ENCODE measurements at regions of chr20 and their contacts with region 1.

Region 1: GRCh38 chr20:58890518-58891085 is 38.1 kb downstream of the GNAS start:
- DNase-seq: peak; percentile 86
- ATAC-seq: peak; percentile 81

Region 2: DNA sequence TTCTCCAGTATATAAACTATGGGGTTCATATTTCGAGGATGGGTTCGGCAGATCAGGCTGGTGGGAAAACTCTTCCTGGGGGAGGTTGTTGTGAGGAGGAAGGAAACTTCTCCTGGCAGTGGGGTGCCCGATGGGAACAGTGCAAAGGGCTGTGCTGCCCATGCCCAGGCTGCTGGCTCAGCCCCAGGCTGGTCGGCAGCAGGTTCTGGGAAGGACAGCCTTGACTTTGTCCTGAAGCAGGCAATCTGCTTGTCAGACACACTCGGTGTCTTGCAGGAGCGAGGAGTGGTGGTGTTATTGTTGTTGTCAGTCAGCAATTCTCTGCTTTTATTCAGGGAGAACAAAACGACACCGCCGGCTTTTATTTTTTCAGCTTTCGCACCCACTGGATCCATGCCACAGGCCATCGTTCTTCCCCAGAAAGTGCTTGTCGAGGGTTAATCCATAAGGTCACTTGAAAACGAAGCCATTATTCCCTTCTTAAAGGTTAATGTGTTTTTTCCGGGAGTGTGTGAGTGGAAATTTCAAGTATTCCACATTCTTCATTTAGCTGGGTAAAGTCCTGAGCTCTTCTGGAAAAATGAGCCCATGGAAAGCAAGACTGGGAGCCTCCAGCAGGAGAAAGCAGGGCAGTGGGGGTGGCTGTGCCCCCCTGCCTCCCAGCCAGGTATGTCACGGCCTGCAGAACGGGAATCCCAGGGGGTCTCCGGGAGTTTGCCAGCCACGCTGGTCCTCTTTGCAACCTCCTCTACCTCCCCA is 296.5 kb before region 1 on chr20:
- intact Hi-C with region 1: no loop called
- DNase-seq: peak; percentile 14
- ATAC-seq: no peak

Region 3: DNA sequence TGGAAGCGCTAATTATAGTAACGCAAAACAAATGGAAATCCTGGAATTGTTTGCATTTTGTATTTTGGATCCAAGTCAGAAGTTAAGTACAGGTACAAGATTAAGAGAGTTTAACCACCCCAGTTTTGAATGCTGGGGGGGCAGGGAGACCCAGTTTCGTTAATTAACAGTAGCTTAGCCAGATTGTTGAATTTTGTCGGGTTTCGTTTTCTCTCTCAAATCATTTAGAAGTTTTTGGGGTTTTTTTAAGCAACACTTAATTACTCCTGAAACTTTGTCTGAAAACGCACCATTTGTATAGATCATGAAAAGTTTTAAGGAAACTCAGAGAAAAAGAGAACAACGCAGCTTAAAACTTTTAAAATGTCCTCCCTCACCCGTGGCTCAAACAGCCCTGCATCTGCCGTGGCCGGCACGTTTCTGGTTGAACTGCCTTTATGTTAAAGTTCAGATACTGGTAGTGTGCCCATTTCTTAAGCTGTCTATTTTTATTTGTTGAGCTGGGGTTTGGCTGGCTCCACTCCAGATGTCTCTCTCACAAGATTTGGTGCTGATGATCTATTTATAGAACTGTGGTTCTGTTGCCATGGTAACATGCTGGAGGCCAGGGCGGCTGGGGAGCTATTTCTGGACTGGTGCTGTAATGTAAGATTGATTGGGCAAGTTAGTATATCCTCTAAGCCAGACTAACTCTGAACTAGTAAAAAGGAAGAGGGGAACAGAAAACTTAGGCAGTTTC is 17.0 kb after region 1 on chr20:
- intact Hi-C with region 1: loop called (anchors 2 kb)
- DNase-seq: peak; percentile 90
- ATAC-seq: peak; percentile 95

Region 4: GRCh38 chr20:59032023-59032712 is 141.6 kb after region 1 on chr20 and contains the start of gene ATP5F1E:
- intact Hi-C with region 1: loop called (anchors 2 kb)
- DNase-seq: peak; percentile 98
- ATAC-seq: peak; percentile 100
- total RNA-seq, gene ATP5F1E: 132 TPM